Left ventricle myocardium inferior (tissue), 1 donor: ENCODE measurements at regions of chr4 and their contacts with region 1.

Region 1: GRCh38 chr4:22688236-22688635 is 4.5 kb upstream of the GBA3 start:
- DNase-seq: no peak
- H3K4me3 ChIP-seq: no peak overlapping the region
- H3K27ac ChIP-seq: no peak overlapping the region
- H3K4me1 ChIP-seq: no peaks in the 10 kb centered on the region
- H3K27me3 ChIP-seq: peaks cover 10% of the 10 kb centered on the region
- CTCF ChIP-seq: no peak

Region 2: GRCh38 chr4:21790438-21791029 is 897.7 kb before region 1 on chr4:
- intact Hi-C with region 1: loop called (anchors 10 kb)
- DNase-seq: no peak
- H3K4me3 ChIP-seq: no peak overlapping the region
- H3K27ac ChIP-seq: no peak overlapping the region
- H3K4me1 ChIP-seq: no peaks in the 10 kb centered on the region
- H3K27me3 ChIP-seq: no peaks in the 10 kb centered on the region
- CTCF ChIP-seq: peak; percentile 56

Region 3: DNA sequence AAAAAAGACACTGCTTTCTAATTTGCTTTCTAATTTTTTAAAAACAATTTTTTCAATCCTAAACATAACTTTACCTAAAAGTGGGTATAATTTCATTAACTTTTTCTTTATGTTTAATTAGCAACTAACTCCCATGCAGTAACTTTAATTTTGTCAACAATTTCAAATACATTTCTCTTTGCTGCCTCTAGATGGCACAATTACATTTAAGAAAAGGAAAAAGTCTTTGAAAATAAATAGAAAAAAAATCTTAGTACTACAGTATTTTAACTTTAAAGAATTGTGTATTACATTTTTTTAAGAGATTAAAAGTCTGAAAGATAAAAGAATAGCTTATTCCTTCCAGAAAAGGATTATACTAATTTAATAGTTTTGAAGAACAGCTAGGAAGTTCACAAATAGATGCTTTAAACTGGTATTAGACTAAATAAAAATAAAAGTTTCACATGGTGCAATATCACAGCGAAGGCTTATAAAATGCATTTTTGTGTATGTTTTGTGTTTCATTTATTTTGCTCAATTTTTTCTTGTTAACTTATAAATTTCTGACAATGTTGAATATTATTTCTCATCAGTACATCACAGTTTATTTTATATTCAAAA is 277.5 kb before region 1 on chr4:
- intact Hi-C with region 1: loop called (anchors 5 kb)
- DNase-seq: no peak
- H3K4me3 ChIP-seq: no peak overlapping the region
- H3K27ac ChIP-seq: no peak overlapping the region
- H3K4me1 ChIP-seq: no peaks in the 10 kb centered on the region
- H3K27me3 ChIP-seq: no peaks in the 10 kb centered on the region
- CTCF ChIP-seq: peak; percentile 64

Region 4: DNA sequence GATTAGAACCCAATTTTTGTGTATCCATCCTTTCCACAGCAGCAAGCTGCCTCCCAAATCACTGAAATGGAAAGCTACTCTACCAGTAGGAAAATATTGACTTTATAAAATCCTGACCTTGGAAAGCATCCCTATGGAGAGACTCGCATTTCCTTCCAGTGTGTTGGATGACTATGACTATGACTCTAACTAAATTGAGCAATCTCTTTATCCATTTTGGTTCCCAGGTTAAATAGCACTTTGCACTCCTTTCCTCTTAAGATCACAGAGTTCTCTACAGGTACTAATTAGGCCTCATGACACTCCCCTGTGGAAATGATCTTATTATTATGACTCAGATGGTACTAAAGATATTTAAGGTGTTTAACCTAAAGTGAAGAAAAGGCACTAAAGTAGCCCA is 769.8 kb after region 1 on chr4:
- intact Hi-C with region 1: no loop called
- DNase-seq: no peak
- H3K4me3 ChIP-seq: no peak overlapping the region
- H3K27ac ChIP-seq: no peak overlapping the region
- H3K4me1 ChIP-seq: peaks cover 17% of the 10 kb centered on the region
- H3K27me3 ChIP-seq: no peaks in the 10 kb centered on the region
- CTCF ChIP-seq: no peak